HCT116 (cell line): ENCODE measurements at regions of chr3 and their contacts with region 1.

Region 1: GRCh38 chr3:58271901-58272501 is 34.0 kb upstream of the RPP14 start:
- DNase-seq: peak; percentile 73
- ATAC-seq: peak; percentile 95
- H3K4me3 ChIP-seq: peak overlapping the region in 1 of 2 experiments; percentile 34; a peak in 2 of 4 replicates
- H3K27ac ChIP-seq: peak overlapping the region; percentile 27; the same call in 1 of the 2 replicates
- H3K4me1 ChIP-seq: peaks cover 11 to 25% of the 10 kb centered on the region in 2 experiments
- H3K27me3 ChIP-seq: no peaks in the 10 kb centered on the region
- CTCF ChIP-seq: no peak
- POLR2A ChIP-seq: no peak
- RAD21 ChIP-seq: no peak

Region 2: DNA sequence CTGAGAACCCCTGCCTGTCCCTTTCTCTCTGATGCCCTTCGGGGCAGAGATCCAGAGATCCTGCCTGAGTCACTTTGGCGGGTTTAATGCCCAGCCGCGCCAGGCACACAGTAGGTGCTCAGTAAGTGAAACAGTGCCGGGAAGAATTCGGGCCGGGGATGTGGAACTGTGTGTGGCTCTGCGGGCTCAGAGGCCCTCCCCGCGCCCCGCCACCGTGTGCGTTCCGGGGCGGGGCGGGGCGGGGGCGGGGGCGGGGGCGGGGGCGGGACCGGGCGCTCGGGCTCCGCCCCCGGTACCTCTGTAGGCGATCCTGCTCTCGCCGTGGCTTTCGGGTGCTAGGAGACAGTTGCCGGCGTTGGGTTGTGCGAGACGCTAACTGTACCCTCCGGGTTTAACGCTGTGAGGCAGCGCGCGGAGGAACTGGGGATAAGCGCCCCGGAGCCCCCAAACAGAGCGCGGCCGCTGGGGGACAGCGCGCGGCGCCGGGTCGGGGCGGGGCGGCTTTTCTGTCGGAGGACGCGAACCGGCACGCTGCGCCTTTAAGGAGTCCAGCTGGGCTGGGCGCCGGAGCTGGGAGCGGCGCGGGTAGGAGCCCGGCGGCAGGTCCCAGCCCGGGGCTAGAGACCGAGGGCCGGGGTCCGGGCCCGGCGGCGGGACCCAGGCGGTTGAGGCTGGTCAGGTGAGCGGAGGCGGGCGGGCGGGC is 34.6 kb before region 1 on chr3 and contains the start of gene ABHD6:
- CTCF ChIA-PET with region 1: no interaction called
- POLR2A ChIA-PET with region 1: no interaction called
- RAD21 ChIA-PET with region 1: no interaction called
- intact Hi-C with region 1: loop called (anchors 2 kb)
- DNase-seq: peak; percentile 33
- ATAC-seq: peak; percentile 84
- H3K4me3 ChIP-seq: peak within 1 kb of the TSS; percentile 68 to 91
- H3K27ac ChIP-seq: peak within 1 kb of the TSS; percentile 73
- H3K4me1 ChIP-seq: peaks cover 8 to 26% of the 10 kb centered on the region in 2 experiments
- H3K27me3 ChIP-seq: no peaks in the 10 kb centered on the region
- CTCF ChIP-seq: peak in 2 of 3 experiments; percentile 26 to 36; a peak in 1 of 6 replicates
- POLR2A ChIP-seq: no peak
- RAD21 ChIP-seq: peak; percentile 69
- total RNA-seq, gene ABHD6: 12.7 TPM

Region 3: DNA sequence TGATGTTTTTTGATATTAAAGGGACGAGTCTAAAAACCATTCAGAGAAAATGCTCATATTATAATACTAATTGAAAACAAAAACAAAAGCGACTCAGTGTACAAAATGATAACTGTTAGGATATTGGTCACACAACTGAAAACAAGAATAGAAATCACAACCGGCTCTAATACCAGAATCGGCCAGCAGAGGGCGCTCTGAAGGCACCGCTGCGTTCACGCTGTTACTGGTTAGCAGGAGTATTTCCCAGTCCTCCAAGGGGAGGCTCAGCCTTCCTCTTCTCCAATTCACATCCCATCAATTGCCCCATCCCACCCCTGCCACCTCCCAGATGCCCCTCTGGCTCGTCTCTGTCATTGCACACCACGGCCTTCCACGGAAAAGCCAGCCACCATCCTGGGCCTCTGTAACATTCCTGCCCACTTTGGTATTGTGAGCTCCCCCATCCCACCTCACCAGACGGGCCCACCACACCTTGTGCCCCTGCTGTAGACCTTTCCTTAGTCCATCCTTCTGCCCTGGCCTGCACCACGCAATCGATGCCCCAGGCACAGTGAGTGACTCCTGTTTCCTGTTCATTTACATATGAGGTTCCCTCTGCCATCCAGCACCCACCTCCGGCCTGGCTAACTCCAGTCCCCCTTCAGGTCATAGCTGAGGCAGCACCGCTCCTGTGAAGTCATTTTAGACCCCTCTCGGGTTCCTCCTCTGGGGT is 296.7 kb after region 1 on chr3:
- CTCF ChIA-PET with region 1: no interaction called
- POLR2A ChIA-PET with region 1: no interaction called
- RAD21 ChIA-PET with region 1: no interaction called
- intact Hi-C with region 1: no loop called
- DNase-seq: no peak
- ATAC-seq: peak; percentile 83
- H3K4me3 ChIP-seq: no peak overlapping the region
- H3K27ac ChIP-seq: no peak overlapping the region
- H3K4me1 ChIP-seq: peaks cover 0 to 25% of the 10 kb centered on the region in 2 experiments; a peak in 3 of 4 replicates
- H3K27me3 ChIP-seq: no peaks in the 10 kb centered on the region
- CTCF ChIP-seq: peak; percentile 80 to 93 (median 87)
- POLR2A ChIP-seq: no peak
- RAD21 ChIP-seq: peak; percentile 77